ENCODE measurements at regions of chr7 and their contacts with region 1.

Region 1: GRCh38 chr7:50467817-50468610 is 17.9 kb upstream of the FIGNL1 start:
- DNase-seq: peak; percentile 84
- ATAC-seq: peak; percentile 92
- H3K4me3 ChIP-seq: peak overlapping the region; percentile 57
- H3K27ac ChIP-seq: no peak overlapping the region
- H3K4me1 ChIP-seq: peaks cover 5% of the 10 kb centered on the region; the same call in 1 of the 2 replicates
- H3K27me3 ChIP-seq: no peaks in the 10 kb centered on the region
- CTCF ChIP-seq: peak; percentile 89

Region 2: DNA sequence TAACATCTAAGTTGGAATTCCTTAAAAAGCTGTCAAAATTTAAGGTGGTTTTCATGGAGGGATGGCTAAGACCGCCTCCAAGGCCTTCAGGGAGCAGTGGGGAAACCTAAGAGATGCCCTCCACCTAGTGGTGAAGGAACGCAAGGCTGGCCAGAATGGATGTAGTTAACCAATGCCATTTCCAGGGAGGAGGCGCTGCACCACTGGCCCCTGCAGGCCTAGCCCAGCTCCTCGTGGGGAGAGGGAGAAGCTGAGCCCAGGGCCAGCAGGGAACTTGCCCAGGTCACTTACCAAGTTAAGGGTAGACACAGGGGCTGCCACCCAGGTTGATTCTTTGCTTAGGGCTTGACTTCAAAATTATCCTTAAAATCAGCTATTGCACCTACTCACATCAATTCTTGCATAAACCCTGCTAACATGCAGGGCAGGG is 49.9 kb before region 1 on chr7:
- CTCF ChIA-PET with region 1: no interaction called
- POLR2A ChIA-PET with region 1: no interaction called
- intact Hi-C with region 1: no loop called
- DNase-seq: peak; percentile 86
- ATAC-seq: peak; percentile 100
- H3K4me3 ChIP-seq: no peak overlapping the region
- H3K27ac ChIP-seq: no peak overlapping the region
- H3K4me1 ChIP-seq: no peaks in the 10 kb centered on the region
- H3K27me3 ChIP-seq: peaks cover 4% of the 10 kb centered on the region; the same call in 1 of the 2 replicates
- CTCF ChIP-seq: peak; percentile 92

Region 3: DNA sequence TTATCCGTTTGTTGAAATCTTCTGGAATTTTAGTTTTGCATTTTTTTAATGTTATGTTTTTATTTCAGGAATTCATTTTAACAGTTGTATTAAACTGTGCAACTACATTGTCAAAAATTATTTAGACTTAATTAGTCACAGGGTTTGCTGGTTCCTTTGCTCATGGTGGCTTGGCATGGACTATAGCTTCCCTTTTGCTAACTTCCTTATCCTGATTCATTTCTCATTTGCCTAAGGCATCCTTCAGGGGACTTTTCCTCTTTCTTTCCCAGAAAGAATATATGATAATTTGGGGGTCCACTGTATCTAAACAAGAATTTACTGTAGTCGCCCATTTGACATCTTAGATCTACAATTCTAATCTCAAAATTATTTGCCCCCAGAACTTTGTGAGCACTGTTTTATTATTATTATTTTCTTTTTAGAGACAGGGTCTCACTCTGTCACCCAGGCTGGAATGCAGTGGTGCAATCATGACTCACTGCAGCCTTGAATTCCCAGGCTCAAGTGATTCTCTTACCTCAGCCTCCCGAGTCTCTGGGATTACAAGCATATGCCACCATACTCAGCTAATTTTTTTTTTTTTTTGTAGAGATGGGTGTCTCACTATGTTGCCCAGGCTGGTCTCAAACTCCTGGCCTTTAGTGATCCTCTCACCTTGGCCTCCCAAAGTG is 31.7 kb before region 1 on chr7:
- CTCF ChIA-PET with region 1: no interaction called
- POLR2A ChIA-PET with region 1: no interaction called
- intact Hi-C with region 1: no loop called
- DNase-seq: peak; percentile 67
- ATAC-seq: peak; percentile 88
- H3K4me3 ChIP-seq: no peak overlapping the region
- H3K27ac ChIP-seq: peak overlapping the region; percentile 64
- H3K4me1 ChIP-seq: peaks cover 14% of the 10 kb centered on the region
- H3K27me3 ChIP-seq: no peaks in the 10 kb centered on the region
- CTCF ChIP-seq: no peak

Region 4: DNA sequence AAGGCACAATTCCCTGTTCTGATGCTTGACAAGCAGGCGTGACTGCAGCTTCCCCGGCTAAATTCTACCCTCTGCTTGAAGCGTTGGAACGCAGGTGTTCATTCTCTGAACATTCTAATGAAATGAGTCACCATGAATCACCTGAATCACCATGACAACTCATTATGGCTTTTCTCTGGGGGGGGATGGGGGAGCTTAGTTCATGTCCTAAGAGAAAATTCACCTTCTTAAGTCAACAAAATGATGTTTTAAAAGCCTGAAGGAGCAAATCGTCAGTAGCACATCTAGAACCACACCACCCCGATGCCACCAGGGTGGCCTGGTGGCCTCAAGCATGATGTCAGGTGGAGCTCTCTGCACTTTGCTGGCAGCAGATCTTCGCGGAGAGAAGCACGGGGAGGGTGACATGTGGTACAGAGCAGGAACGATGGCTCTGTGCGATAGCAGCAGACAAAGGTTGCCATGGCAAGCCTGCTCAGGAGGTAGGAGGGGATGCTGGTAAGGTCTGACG is 63.4 kb after region 1 on chr7:
- CTCF ChIA-PET with region 1: interaction called, 4 read pairs
- POLR2A ChIA-PET with region 1: interaction called, 8 read pairs
- intact Hi-C with region 1: loop called (anchors 2 kb)
- DNase-seq: peak; percentile 96
- ATAC-seq: peak; percentile 58
- H3K4me3 ChIP-seq: peak overlapping the region; percentile 54; the same call in 1 of the 2 replicates
- H3K27ac ChIP-seq: peak overlapping the region; percentile 99
- H3K4me1 ChIP-seq: peaks cover 39% of the 10 kb centered on the region
- H3K27me3 ChIP-seq: no peaks in the 10 kb centered on the region
- CTCF ChIP-seq: no peak

Region 5: DNA sequence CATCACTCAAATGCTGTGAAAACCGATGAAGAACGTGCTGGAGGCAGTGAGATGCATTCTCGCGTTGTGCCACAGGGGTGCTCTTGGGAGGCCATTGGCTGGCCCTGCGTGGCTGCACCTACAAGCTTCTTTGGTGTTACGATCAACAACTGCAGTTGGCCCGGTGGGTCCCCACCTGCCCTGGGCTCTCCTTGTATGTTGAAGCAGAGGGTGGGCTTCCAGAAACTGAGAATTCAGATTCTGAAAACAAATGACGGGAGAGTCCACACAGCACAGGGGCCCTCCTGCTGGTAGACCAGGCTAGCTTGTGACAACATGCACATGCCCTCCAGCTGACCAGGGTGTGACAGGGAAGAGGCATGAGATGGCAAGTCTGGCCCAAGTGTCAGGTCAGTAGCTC is 120.9 kb after region 1 on chr7:
- CTCF ChIA-PET with region 1: interaction called, 3 read pairs
- POLR2A ChIA-PET with region 1: no interaction called
- intact Hi-C with region 1: loop called (anchors 5 kb)
- DNase-seq: no peak
- ATAC-seq: peak; percentile 56
- H3K4me3 ChIP-seq: no peak overlapping the region
- H3K27ac ChIP-seq: no peak overlapping the region
- H3K4me1 ChIP-seq: no peaks in the 10 kb centered on the region; the same call in 1 of the 2 replicates
- H3K27me3 ChIP-seq: no peaks in the 10 kb centered on the region
- CTCF ChIP-seq: peak; percentile 42; the same call in 1 of the 2 replicates

Region 6: DNA sequence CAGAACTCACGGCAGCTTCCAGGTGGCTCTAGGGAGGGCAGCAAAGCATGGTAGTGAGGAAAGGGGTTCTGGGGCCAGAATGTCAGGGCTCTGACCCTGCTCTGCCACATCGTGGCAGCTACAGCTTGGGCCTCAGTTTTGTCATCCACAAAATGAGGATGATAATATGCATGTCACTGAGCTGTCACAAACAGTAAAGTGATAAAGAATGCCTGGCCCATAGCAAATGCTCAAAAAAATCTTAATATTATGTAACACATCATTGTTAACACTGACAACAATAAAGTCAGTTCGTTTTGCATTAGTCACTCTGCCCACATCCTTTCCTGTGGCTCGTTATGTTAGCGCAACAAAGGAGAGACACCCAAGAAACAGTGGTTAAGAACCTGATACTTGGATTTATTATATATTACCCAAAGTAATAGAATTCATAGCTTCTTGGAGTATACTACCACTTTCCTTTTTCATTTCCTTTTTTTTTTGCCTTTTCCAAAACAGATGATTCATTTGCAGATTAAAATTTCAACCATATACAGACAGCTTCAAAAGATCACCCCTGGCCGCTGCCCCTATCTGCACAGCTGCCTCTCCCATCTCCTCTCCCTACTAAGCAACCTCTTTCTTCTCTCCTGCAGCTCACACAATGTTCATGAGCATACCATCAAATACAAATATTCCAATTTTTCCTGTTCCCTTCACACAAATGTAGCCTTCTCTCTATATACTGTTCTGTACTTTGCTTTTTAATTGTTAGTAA is 142.7 kb after region 1 on chr7:
- CTCF ChIA-PET with region 1: no interaction called
- POLR2A ChIA-PET with region 1: no interaction called
- intact Hi-C with region 1: loop called (anchors 1 kb)
- DNase-seq: peak; percentile 88
- ATAC-seq: peak; percentile 97
- H3K4me3 ChIP-seq: no peak overlapping the region
- H3K27ac ChIP-seq: no peak overlapping the region
- H3K4me1 ChIP-seq: peaks cover 15% of the 10 kb centered on the region
- H3K27me3 ChIP-seq: no peaks in the 10 kb centered on the region
- CTCF ChIP-seq: no peak

Region 7: GRCh38 chr7:50632561-50633413 is 164.8 kb after region 1 on chr7:
- CTCF ChIA-PET with region 1: no interaction called
- POLR2A ChIA-PET with region 1: no interaction called
- intact Hi-C with region 1: loop called (anchors 1 kb)
- DNase-seq: peak; percentile 69
- ATAC-seq: peak; percentile 85
- H3K4me3 ChIP-seq: no peak overlapping the region
- H3K27ac ChIP-seq: no peak overlapping the region
- H3K4me1 ChIP-seq: no peaks in the 10 kb centered on the region
- H3K27me3 ChIP-seq: no peaks in the 10 kb centered on the region
- CTCF ChIP-seq: peak; percentile 85

Region 8: GRCh38 chr7:50679218-50680007 is 211.4 kb after region 1 on chr7:
- CTCF ChIA-PET with region 1: no interaction called
- POLR2A ChIA-PET with region 1: no interaction called
- intact Hi-C with region 1: loop called (anchors 1 kb)
- DNase-seq: peak; percentile 76
- ATAC-seq: peak; percentile 66
- H3K4me3 ChIP-seq: no peak overlapping the region
- H3K27ac ChIP-seq: no peak overlapping the region
- H3K4me1 ChIP-seq: peaks cover 8% of the 10 kb centered on the region
- H3K27me3 ChIP-seq: no peaks in the 10 kb centered on the region
- CTCF ChIP-seq: peak; percentile 63